ENCODE measurements at regions of chr17 and their contacts with region 1.

Region 1: GRCh38 chr17:75784473-75785015 is at the start of gene UNK:
- DNase-seq: peak; percentile 95

Region 2: GRCh38 chr17:75764711-75765421 is 19.7 kb before region 1 on chr17 and contains the start of gene GALK1:
- CTCF ChIA-PET with region 1: interaction called, 9 read pairs
- POLR2A ChIA-PET with region 1: interaction called, 206 read pairs
- DNase-seq: peak; percentile 83

Region 3: DNA sequence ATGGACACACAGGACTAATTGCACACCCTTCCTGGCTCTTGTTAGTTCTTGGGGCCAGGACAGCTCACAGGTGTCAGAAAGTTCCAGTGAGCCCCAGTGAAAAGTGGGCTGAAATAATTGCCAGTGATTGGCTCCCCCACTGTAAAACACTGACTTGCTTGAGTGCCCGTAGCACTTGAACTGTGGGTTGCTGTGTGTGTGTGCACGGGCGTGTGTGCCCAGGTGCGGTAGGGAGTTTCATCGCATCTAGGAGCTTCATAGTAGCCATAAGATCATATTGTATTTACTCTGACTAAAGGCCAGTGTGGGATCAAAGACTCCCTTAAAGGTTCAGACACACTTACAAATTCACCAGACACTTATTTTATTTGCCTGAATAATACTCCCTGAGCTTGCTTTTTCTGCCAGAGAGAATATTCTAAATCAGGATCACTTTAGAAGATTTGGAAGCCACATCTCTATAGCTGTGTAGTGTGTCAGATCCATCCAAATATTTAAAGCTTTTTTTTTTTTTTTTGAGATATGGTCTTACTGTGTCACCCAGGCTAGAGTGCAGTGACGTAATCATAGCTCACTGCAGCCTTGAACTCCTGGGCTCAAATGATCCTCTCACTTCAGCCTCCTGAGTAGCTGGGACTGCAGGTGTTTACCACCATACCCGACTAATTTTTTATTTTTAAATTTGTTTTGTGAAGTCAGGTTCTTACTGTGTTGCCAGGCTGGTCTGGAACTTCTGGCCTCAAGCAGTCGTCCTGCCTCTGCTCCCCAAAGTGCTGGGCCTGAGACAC is 11.5 kb after region 1 on chr17:
- CTCF ChIA-PET with region 1: interaction called, 7 read pairs
- POLR2A ChIA-PET with region 1: interaction called, 34 read pairs
- DNase-seq: no peak

Region 4: GRCh38 chr17:75965475-75965874 is 180.9 kb after region 1 on chr17:
- CTCF ChIA-PET with region 1: no interaction called
- POLR2A ChIA-PET with region 1: no interaction called
- DNase-seq: no peak

Measured in HEK293T (cell line).